PC-3 (cell line): ENCODE measurements at regions of chr7 and their contacts with region 1.

Region 1: DNA sequence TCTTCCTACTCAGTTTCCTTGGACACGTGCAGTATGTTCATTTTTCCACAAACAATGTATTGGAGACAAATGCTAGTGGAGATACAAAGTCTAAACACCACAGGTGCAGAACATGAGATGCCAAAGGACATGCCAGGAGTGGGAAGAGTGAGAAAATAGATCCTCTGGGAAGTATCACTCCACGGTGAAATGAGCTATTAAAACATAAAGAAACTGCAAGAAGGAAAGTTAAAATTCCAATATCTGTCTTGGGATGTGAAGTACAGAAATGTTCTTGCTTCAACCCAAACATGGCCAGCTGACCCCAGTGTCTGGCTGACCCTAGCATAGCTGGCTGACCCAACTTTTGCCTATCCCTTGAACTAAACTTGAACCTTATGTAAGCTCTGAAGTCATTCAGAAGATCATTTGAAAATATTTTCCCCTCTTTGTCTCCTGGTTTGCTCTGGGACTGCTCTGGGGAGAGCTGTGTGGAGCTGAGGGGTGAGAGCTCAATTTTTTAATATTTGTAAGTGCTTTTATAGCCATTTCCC is 59.5 kb downstream of the FZD1 start:
- DNase-seq: no peak
- ATAC-seq: no peak
- H3K4me3 ChIP-seq: no peak overlapping the region
- H3K27ac ChIP-seq: no peak overlapping the region
- H3K4me1 ChIP-seq: no peaks in the 10 kb centered on the region
- H3K27me3 ChIP-seq: peaks cover 12% of the 10 kb centered on the region; the same call in 1 of the 2 replicates
- CTCF ChIP-seq: no peak

Region 2: DNA sequence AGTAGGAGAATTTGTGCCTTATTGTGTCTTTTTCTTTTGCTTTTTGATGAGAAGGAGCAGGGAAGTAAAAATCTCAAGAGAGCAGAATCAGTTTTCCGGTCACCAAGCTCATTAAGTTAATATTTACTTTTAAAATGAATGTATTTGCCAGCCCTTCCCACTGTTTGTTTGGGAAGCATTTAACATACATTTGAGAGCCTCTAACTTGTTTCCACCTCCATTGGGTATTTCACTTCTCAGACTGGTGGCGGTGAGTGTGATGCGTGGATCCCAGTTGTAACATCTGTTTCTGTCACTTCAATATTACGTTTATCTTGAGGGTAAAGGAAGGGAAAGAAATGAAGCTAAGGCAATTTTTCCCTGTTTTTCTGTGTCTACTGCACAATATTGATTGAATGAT is 704.8 kb before region 1 on chr7:
- CTCF ChIA-PET with region 1: no interaction called
- POLR2A ChIA-PET with region 1: interaction called, 19 read pairs
- intact Hi-C with region 1: no loop called
- DNase-seq: peak; percentile 46
- ATAC-seq: peak; percentile 84
- H3K4me3 ChIP-seq: no peak overlapping the region
- H3K27ac ChIP-seq: peak overlapping the region; percentile 55
- H3K4me1 ChIP-seq: peaks cover 31% of the 10 kb centered on the region
- H3K27me3 ChIP-seq: no peaks in the 10 kb centered on the region
- CTCF ChIP-seq: no peak

Region 3: DNA sequence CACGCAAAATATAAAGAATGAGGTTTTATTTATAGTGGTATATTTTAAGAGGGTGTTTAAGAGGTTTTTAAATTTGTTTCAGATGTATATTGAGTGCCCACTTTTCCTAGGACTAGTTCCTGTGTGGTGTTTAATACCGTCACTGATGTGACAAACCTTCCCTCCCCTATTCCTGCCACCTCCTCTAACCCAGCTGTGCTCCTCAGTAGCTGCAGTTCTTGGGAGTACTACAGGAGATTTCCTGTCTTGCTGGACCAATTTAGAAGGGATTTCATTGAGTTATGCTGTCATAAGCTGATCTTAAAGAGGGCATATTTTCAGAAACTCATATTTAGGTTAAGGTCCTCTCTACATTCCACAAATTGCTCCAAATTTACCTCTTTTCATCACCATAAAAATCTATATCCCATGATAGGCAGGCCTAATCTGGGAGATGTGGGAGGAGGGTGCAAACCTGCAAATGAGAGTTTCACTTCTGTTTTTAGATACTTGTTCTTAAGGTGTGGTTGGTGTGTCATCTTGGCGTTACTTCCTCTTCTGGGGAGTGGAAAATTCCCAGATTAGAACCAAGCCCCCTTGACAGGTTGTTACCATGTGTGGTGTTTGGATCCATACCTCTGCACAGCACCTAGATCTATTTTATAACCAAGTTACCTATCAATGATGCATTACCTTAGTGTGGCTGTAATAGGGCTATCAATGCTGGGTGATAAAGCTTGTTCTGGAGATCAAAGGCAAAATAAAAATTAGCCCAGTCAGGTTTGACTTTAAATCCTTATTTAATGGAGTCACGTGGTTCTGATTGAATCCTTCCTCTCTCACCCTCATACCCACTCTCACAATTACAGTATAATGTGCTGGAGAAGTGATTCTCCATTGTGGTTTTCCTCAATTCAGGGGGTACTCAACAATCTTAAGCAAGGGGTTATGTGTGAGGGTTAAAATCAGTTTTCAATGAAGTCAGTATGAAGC is 586.4 kb before region 1 on chr7:
- CTCF ChIA-PET with region 1: no interaction called
- POLR2A ChIA-PET with region 1: no interaction called
- intact Hi-C with region 1: no loop called
- DNase-seq: no peak
- ATAC-seq: no peak
- H3K4me3 ChIP-seq: no peak overlapping the region
- H3K27ac ChIP-seq: no peak overlapping the region
- H3K4me1 ChIP-seq: 0 out of 2 replicates have a peak, but pooled peaks cover 4% of the 10 kb centered on the region
- H3K27me3 ChIP-seq: no peaks in the 10 kb centered on the region
- CTCF ChIP-seq: no peak